PC-9 (cell line): ENCODE measurements at regions of chr12 and their contacts with region 1.

Region 1: GRCh38 chr12:103868215-103868614 is 27.2 kb upstream of the NT5DC3 start:
- DNase-seq: no peak
- H3K4me3 ChIP-seq: no peak overlapping the region
- H3K27ac ChIP-seq: no peak overlapping the region
- H3K4me1 ChIP-seq: no peaks in the 10 kb centered on the region
- H3K27me3 ChIP-seq: no peaks in the 10 kb centered on the region
- CTCF ChIP-seq: no peak

Region 2: GRCh38 chr12:103578926-103579325 is 289.3 kb before region 1 on chr12:
- CTCF ChIA-PET with region 1: interaction called, 4 read pairs
- POLR2A ChIA-PET with region 1: no interaction called
- intact Hi-C with region 1: loop called (anchors 5 kb)
- DNase-seq: no peak
- H3K4me3 ChIP-seq: no peak overlapping the region
- H3K27ac ChIP-seq: no peak overlapping the region
- H3K4me1 ChIP-seq: peaks cover 4% of the 10 kb centered on the region; the same call in 1 of the 2 replicates
- H3K27me3 ChIP-seq: peaks cover 27% of the 10 kb centered on the region
- CTCF ChIP-seq: no peak

Region 3: GRCh38 chr12:103586132-103586531 is 282.1 kb before region 1 on chr12:
- CTCF ChIA-PET with region 1: interaction called, 4 read pairs
- POLR2A ChIA-PET with region 1: no interaction called
- intact Hi-C with region 1: loop called (anchors 2 kb)
- DNase-seq: no peak
- H3K4me3 ChIP-seq: no peak overlapping the region
- H3K27ac ChIP-seq: no peak overlapping the region
- H3K4me1 ChIP-seq: no peaks in the 10 kb centered on the region
- H3K27me3 ChIP-seq: peaks cover 38% of the 10 kb centered on the region
- CTCF ChIP-seq: peak; percentile 44; the same call in 1 of the 2 replicates

Region 4: DNA sequence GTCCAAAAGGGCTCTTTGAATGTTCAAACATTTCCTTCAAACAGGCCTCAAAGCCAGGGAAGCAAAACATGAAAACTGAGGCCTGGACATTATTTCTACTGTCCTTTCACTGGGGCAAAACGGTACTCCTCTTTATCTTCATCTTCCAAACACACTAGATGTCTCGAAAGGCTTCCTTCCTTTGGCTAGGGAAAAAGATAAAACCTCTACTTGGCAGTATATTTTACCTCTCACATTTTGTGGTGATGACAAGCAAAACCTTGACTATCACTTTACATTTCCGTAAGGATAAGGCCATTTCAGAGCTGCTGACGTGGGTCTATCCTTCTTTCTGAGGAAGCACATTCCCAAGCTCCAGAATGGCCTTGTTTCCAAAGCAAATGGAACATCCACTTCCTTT is 271.2 kb before region 1 on chr12:
- CTCF ChIA-PET with region 1: no interaction called
- POLR2A ChIA-PET with region 1: no interaction called
- intact Hi-C with region 1: no loop called
- DNase-seq: no peak
- H3K4me3 ChIP-seq: no peak overlapping the region
- H3K27ac ChIP-seq: no peak overlapping the region
- H3K4me1 ChIP-seq: no peaks in the 10 kb centered on the region
- H3K27me3 ChIP-seq: peaks cover 30% of the 10 kb centered on the region; the same call in 1 of the 2 replicates
- CTCF ChIP-seq: no peak

Region 5: DNA sequence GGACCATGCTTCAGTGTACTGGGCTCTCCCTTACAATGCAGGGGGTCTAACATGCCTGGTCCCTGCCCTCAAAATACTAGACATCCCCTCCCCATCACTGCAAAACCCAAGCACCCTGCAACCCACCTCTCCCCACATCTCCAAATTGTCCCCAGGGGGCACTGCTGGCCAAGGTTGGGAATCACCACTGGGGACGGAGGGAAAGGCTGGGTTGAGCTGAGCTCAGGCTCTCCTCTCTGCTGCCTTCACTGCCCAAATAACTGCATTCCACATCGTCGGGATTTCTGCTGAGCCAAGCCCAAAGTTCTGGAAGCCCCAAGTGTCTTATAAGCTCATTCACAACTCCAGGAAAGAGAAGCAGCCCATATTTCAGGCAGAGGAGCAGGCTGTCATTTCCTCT is 96.7 kb before region 1 on chr12:
- CTCF ChIA-PET with region 1: interaction called, 7 read pairs
- POLR2A ChIA-PET with region 1: no interaction called
- intact Hi-C with region 1: loop called (anchors 1 kb)
- DNase-seq: peak in 1 of 2 experiments; percentile 49
- H3K4me3 ChIP-seq: no peak overlapping the region
- H3K27ac ChIP-seq: no peak overlapping the region
- H3K4me1 ChIP-seq: no peaks in the 10 kb centered on the region
- H3K27me3 ChIP-seq: no peaks in the 10 kb centered on the region
- CTCF ChIP-seq: peak; percentile 73

Region 6: GRCh38 chr12:103840876-103841689 is 27.1 kb before region 1 on chr12 and contains the start of gene NT5DC3:
- CTCF ChIA-PET with region 1: no interaction called
- POLR2A ChIA-PET with region 1: no interaction called
- intact Hi-C with region 1: no loop called
- DNase-seq: peak; percentile 71 to 84
- H3K4me3 ChIP-seq: peak within 1 kb of the TSS; percentile 85
- H3K27ac ChIP-seq: peak within 1 kb of the TSS; percentile 92
- H3K4me1 ChIP-seq: peaks cover 31% of the 10 kb centered on the region
- H3K27me3 ChIP-seq: no peaks in the 10 kb centered on the region
- CTCF ChIP-seq: no peak
- total RNA-seq, gene NT5DC3: 11.5 and 13.2 TPM in 2 replicates

Region 7: DNA sequence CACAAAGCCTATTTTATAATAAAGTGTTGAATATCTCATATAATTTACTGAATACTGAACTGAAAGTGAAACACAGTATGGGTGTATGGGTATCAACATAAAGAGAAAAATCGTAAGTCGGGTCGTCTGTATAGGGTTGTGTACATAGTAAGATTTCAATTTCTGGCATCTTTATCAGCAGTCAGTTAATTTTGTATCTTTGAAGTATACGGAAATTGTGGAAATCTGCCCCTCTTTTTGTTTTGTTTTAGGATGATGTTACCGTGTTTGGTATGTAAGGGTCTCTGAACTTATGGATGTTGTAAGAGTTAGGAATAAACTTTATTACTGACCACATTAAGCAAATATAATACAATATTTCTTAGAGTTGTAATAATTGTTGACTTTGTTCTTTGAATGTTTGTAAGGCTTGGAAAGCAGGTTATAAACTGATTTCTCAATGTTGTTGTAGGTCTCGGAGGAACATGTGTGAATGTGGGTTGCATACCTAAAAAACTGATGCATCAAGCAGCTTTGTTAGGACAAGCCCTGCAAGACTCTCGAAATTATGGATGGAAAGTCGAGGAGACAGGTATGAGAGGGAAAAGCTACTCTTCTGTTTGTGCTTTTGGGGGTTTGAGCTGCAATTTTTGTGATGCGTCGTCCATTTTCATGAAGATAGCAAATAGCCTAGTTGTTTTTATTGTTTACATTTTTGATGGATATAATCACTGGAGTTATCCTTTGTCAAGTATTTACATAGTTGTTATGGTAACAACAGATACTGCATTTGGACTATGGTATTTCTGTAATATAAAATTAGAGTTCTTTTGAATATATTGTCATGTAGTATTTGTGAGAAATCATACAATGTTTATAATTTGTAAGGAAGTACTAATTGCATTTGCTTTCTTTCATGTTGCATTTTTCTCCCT is 447.4 kb after region 1 on chr12:
- CTCF ChIA-PET with region 1: no interaction called
- POLR2A ChIA-PET with region 1: no interaction called
- intact Hi-C with region 1: no loop called
- DNase-seq: no peak
- H3K4me3 ChIP-seq: peak overlapping the region; percentile 21; the same call in 1 of the 2 replicates
- H3K27ac ChIP-seq: peak overlapping the region; percentile 77
- H3K4me1 ChIP-seq: peaks cover 93% of the 10 kb centered on the region
- H3K27me3 ChIP-seq: no peaks in the 10 kb centered on the region
- CTCF ChIP-seq: no peak